Dorsolateral prefrontal cortex (tissue), 120 donors: ENCODE measurements at regions of chr1 and their contacts with region 1.

Region 1: DNA sequence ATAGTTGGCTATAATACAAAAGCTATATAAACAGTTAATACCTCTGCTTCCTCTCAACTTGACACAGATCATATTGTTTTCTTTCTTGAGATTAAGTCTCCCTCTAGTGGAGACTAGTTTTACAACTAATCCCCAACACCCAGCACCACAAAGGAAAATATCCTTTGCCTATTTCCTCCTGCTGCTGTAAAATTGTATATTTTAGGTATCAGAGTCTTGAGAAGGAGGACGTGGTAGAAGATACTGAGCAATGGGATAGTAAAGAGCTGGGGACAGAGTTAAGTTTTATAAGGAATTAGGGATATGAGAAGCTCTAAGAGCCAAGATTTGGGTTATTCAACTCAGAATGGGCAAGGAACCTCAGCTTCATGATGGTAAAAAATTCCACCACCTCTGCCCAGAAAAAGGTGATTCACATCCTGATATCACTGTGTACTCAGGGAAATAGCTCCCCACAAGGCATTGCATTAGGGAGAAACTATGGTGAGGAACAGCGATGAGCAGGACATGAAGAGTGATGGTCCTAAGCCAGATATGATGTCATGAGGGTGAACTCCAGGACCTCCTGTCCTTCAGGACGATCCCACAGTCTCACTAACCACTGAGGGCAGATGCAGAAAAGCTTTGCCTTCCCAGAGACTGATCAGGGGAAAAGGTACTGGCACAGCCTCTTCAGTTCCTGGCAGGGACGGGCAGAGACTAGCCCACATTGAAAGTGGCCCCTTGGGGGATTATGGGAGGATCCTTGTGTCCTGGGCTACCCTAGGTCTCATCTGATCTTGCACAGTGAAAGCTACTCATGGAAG is 14.7 kb upstream of the CFAP126 start:
- DNase-seq: no peak
- H3K4me3 ChIP-seq: no peak overlapping the region
- H3K27ac ChIP-seq: peak overlapping the region in 45 of 59 donors; percentile 13 to 83 (median 59)
- H3K27me3 ChIP-seq: no peaks in the 10 kb centered on the region
- CTCF ChIP-seq: peak; percentile 57 to 88 (median 77)

Region 2: GRCh38 chr1:161209790-161210409 is 172.5 kb before region 1 on chr1:
- intact Hi-C with region 1: loop called in 1 of 2 experiments (anchors 5 kb)
- DNase-seq: peak in 8 of 10 donors; percentile 65 to 83 (median 78)
- H3K4me3 ChIP-seq: peak overlapping the region in 1 of 59 donors; percentile 8
- H3K27ac ChIP-seq: peak overlapping the region in 37 of 59 donors; percentile 1 to 74 (median 37)
- H3K27me3 ChIP-seq: no peaks in the 10 kb centered on the region
- CTCF ChIP-seq: peak; percentile 73 to 96 (median 88)

Region 3: GRCh38 chr1:161305867-161306519 is 76.4 kb before region 1 on chr1:
- intact Hi-C with region 1: loop called (anchors 5 kb)
- DNase-seq: peak; percentile 53 to 90 (median 80)
- H3K4me3 ChIP-seq: peak overlapping the region; percentile 41 to 90 (median 77)
- H3K27ac ChIP-seq: peak overlapping the region in 57 of 59 donors; percentile 24 to 86 (median 74)
- H3K27me3 ChIP-seq: no peaks in the 10 kb centered on the region
- CTCF ChIP-seq: peak in 44 of 56 donors; percentile 10 to 58 (median 36)

Region 4: DNA sequence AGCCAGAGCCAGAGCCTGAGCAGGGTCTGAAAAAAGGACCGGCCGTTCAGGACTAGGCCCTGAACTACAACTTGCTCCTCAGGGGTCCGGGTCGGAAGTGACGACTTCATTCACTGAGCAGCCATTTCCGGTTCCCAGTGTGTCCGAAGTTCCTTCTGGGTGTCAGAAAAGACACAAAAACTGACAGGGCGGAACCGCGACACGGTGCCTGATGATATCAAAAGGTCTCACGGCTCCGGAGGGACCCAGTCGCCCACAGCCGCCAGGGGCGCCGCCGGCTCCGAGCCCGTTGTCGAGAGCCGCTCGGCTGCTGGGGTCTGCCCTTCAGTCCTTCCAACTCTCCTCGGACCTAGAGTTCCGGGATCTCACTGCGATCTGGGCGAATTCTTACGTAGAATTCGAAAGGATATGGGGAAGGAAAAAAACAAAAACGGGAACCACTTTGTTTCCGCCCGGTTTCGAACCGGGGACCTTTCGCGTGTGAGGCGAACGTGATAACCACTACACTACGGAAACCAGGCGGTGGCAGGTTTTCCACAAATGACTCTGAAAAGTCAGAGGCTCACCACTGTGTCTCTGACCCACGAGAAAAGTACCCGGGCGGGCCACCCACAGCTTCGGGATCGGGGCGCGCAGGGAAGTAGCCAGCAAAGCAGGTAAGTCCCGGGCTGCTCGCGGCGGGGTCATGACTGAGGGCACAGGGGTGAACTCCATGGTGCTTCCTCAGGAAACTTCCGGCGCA is 17.0 kb after region 1 on chr1:
- intact Hi-C with region 1: no loop called
- DNase-seq: peak; percentile 74 to 94 (median 90)
- H3K4me3 ChIP-seq: peak overlapping the region; percentile 68 to 100 (median 88)
- H3K27ac ChIP-seq: peak overlapping the region; percentile 91 to 100 (median 100)
- H3K27me3 ChIP-seq: no peaks in the 10 kb centered on the region
- CTCF ChIP-seq: peak in 49 of 56 donors; percentile 13 to 62 (median 42)

Region 5: GRCh38 chr1:161427733-161428516 is 45.5 kb after region 1 on chr1:
- intact Hi-C with region 1: no loop called
- DNase-seq: no peak
- H3K4me3 ChIP-seq: peak overlapping the region in 2 of 59 donors; percentile 8 to 9
- H3K27ac ChIP-seq: no peak overlapping the region
- H3K27me3 ChIP-seq: peaks cover 0 to 58% (median 36%) of the 10 kb centered on the region in 45 donors
- CTCF ChIP-seq: no peak